ENCODE measurements at regions of chr16 and their contacts with region 1.

Region 1: DNA sequence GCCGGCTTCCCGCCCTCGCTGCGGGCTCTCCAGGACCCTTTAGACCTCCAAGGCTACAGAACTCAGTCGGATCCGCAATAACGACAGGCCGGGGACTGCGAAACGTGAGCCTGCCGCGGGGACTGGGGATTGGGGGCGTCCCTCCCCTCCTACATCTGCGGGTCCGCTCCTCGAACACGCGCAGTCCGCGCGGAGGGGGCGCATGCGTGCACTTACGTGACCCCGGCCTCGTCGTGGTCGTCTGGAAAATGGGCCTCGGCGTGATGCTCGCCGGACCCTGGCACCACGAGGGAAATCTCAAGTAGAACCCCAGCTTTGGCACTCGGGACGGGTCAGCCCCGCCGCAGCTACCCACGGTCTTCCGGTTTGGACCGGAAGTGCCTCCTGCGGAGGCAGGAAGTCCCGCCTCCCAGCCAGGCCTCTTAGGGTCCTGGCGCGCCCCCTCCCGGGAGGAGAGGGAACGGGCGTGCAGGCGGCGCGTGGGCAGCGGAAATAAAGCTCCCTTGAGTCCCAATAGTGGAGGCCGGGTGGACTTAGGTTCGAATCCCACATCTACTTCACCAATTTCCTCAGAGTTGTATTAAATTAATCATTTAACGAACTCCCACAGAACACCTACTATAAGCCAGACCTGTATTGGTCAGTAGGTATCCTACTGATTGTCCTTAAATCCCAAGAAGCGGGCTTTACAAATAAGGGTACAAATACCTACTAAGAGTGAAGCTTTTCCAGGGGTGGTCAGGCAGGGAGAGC is at the start of gene TAF1C:
- DNase-seq: peak; percentile 99
- CTCF ChIP-seq: peak; percentile 99

Region 2: GRCh38 chr16:83952940-83953795 is 233.7 kb before region 1 on chr16 and contains the start of gene OSGIN1:
- CTCF ChIA-PET with region 1: interaction called, 27 read pairs
- POLR2A ChIA-PET with region 1: no interaction called
- DNase-seq: peak; percentile 88
- CTCF ChIP-seq: no peak

Region 3: DNA sequence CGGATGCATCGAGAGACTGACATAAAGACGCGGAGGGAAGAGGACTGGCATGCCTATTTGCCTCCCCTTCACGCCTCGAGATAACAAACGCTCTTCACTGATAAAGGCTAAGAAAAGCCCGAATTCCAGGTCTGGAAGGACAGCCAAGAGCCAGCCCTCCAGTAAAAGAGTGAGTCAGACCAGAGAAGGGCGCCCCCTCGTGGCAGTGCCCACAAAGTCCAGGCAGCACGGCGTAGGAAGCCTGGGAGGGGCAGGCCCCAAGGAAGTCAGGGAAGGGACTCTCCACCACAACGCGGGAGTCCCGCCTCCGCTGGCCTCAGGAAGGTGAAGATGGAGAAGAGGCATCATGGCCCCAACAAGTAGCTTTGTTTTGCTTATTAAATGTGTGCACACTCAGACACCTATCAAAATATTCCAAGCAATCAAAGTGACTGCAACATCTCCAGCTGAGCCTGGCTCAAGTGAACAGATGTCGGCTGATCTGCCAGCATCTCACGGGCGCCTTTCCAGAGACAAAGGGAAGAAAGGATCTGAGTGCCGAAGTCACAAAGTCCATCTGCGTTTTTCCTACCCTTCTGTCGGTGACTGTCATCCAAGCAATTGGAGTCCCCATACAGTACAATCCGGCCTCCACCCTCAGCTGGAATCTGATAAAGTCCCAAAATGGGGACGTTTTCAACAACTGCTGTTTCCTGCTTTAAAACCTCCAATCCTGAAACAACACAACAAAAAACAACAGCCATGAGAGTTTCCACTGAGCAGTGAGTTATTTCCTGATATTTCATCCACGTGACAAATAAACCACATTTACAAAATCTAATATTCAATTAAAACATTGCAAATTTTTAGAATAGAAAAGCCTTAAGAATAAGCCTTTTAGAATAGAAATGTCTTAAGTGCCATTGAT is 123.9 kb before region 1 on chr16:
- CTCF ChIA-PET with region 1: interaction called, 11 read pairs
- POLR2A ChIA-PET with region 1: no interaction called
- DNase-seq: peak; percentile 65
- CTCF ChIP-seq: peak; percentile 54

Region 4: DNA sequence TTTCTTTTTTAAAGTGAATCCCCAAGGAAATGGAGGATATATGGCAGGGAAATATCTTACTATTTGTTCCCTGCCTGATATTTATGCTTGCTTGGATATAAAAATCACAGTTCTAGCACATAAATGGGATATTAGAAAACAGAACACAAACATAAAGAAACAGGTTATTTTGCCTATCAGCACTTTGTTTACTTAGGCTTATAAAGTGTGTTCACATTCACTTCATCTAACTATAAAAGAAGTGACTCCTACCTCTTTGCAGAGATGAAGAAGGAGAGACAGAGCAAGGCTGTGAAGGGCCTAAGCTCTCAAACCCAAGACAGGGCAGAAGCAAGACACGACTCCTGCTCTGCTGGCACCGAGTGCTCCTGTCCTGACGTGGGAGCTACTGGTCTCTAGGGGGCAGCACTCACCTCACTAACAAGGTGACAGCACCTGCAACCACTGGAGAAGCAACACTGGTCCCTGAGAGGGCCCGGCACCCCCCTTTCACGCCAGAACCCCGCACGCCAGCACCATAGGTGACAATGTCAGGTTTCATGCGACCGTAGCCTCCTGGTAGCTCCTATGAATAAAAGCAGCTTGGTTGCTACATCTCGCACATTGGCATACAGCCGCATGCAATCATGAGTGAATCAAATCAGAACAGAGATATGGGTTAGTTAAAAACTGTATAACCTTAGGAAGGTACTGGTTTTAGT is 102.1 kb before region 1 on chr16:
- CTCF ChIA-PET with region 1: interaction called, 155 read pairs
- POLR2A ChIA-PET with region 1: no interaction called
- DNase-seq: peak; percentile 85
- CTCF ChIP-seq: peak; percentile 94

Region 5: DNA sequence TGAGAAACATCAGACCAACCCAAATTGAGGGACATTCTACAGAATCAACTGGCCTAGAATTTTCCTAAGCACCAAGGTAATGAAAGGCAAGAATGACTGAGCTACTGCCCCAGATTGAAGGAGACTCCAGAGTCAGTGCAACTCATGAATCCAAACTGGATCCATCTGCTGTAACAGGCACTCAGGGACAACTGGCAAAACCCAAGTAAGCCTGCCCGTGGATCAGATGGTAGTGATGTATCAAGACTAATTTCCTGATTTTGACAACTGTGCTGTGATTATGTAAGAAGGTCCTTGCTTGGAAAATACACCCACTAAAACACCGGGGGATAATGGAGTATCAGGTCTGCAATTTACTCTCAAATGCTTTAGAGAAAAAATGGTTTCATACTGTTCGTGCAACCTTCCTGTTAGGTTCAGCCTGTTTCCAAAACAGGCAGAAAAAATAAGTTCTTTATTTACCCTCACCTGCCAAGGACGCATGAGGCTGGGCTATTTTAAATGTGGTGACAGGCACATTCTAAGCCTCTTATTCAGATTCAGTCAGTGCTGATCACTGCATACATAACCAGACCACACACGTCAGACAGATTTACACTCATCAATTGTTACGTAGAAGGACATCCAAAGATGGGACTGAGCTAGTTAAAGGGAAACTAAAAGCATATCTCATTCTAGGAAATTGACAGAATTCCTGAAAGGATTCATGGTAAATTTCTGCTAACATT is 77.1 kb before region 1 on chr16:
- CTCF ChIA-PET with region 1: interaction called, 24 read pairs
- POLR2A ChIA-PET with region 1: no interaction called
- DNase-seq: no peak
- CTCF ChIP-seq: no peak

Region 6: GRCh38 chr16:84169765-84170310 is 17.0 kb before region 1 on chr16:
- CTCF ChIA-PET with region 1: interaction called, 25 read pairs
- POLR2A ChIA-PET with region 1: no interaction called
- DNase-seq: no peak
- CTCF ChIP-seq: no peak

Region 7: DNA sequence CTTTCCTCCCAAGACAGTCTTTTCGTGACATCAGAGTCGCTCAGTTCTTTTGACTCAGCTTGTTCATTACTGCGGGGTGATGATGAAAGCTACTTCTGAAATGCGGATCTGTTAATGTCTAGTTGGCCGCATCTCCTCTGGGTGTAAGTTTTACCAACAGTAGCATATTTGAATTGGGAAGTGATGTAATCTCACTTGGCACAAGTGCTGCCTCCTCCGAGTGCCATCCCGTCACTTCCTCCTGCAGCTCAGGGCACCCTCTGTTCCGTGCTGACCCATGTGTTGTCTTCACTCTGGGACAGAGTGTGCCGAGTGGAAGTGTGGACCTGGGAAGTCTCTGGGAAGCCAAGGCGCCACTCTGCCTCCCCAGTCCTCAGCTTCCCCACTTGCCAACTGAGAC is 13.0 kb after region 1 on chr16:
- CTCF ChIA-PET with region 1: interaction called, 10 read pairs
- POLR2A ChIA-PET with region 1: no interaction called
- DNase-seq: no peak
- CTCF ChIP-seq: no peak